Naive thymus-derived CD4-positive, alpha-beta T cell (primary cell): ENCODE measurements at regions of chr7 and their contacts with region 1.

Region 1: DNA sequence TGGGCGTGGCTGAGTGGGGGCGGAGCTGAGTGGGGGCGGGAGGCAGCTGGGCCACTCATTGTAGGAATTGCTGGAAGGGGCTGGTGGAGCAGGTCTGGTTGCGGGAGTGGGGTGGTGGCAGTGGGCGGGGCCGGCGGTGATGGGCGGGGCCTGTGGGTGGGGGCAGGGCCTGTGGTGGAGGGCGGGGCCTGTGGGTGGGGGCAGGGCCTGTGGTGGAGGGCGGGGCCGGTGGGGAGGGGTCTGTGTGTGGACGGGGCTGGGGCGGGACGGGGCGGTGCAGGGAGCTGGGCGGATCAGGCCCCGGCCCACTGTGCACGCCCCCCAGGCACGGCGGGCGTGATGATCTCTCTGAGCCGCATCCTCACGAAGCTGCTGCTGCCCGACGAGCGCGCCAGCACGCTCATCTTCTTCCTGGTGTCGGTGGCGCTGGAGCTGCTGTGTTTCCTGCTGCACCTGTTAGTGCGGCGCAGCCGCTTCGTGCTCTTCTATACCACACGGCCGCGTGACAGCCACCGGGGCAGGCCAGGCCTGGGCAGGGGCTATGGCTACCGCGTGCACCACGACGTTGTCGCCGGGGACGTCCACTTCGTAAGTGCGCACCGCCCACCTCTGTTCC is 14.0 kb downstream of the SLC29A4 start:
- DNase-seq: peak; percentile 49 to 83 (median 72)
- ATAC-seq: peak; percentile 95
- H3K4me3 ChIP-seq: peak overlapping the region; percentile 61
- H3K4me3 Mint-ChIP-seq: peak overlapping the region; percentile 82 to 92 (median 85)
- H3K27ac ChIP-seq: no peak overlapping the region
- H3K27ac Mint-ChIP-seq: peak overlapping the region in 8 of 9 donors; percentile 36 to 92 (median 74)
- H3K4me1 ChIP-seq: peaks cover 8 to 13% of the 10 kb centered on the region in 2 donors
- H3K4me1 Mint-ChIP-seq: peaks cover 9 to 17% (median 14%) of the 10 kb centered on the region in 7 donors
- H3K27me3 ChIP-seq: no peaks in the 10 kb centered on the region
- H3K27me3 Mint-ChIP-seq: peaks cover 0 to 28% (median 3%) of the 10 kb centered on the region in 5 donors

Region 2: GRCh38 chr7:5282543-5283316 is 14.0 kb before region 1 on chr7 and contains the start of gene SLC29A4:
- CTCF ChIA-PET with region 1: no interaction called
- POLR2A ChIA-PET with region 1: no interaction called
- intact Hi-C with region 1: loop called in 1 of 2 experiments (anchors 1 kb)
- DNase-seq: no peak
- ATAC-seq: peak; percentile 68
- H3K4me3 ChIP-seq: no peak within 1 kb of the TSS
- H3K4me3 Mint-ChIP-seq: peak within 1 kb of the TSS in 2 of 10 donors; percentile 37 to 52
- H3K27ac ChIP-seq: no peak within 1 kb of the TSS
- H3K27ac Mint-ChIP-seq: no peak within 1 kb of the TSS
- H3K4me1 ChIP-seq: no peaks in the 10 kb centered on the region
- H3K4me1 Mint-ChIP-seq: peaks cover 0 to 2% (median 0%) of the 10 kb centered on the region in 7 donors
- H3K27me3 ChIP-seq: no peaks in the 10 kb centered on the region
- H3K27me3 Mint-ChIP-seq: peaks cover 5 to 32% (median 5%) of the 10 kb centered on the region in 5 donors
- total RNA-seq, gene SLC29A4: 0.11 to 1.3 (median 0.32) TPM

Region 3: DNA sequence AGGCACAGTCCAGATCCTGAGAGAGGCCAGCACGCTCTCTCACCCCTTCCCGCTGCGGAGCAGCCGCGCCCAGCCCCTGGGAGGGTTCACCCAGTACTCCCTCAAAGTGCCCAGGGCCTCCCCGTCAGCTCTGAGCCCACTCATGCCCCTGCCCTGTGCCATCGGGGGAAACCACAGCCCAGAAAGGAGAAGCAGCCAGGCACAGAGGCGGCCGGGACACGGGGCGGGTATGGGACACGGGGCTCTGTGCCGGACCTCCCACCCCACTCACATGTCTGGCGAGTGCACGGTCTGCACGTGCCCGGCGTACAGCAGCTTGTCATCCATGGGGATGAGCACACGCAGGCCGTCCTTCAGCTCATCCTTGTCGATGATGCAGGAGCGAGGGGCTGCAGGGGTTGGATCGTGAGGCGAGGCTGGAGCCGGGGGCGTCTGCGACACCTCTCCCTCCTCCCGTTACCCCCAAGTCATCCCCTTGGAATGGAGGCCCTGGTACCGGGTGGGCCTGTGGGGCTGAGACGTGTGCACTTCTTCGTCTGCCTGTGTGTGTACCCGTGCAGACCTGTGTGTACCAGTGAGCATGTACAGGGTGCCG is 24.2 kb after region 1 on chr7:
- CTCF ChIA-PET with region 1: no interaction called
- POLR2A ChIA-PET with region 1: no interaction called
- intact Hi-C with region 1: no loop called
- DNase-seq: no peak
- ATAC-seq: no peak
- H3K4me3 ChIP-seq: no peak overlapping the region
- H3K4me3 Mint-ChIP-seq: no peak overlapping the region
- H3K27ac ChIP-seq: no peak overlapping the region
- H3K27ac Mint-ChIP-seq: no peak overlapping the region
- H3K4me1 ChIP-seq: no peaks in the 10 kb centered on the region
- H3K4me1 Mint-ChIP-seq: no peaks in the 10 kb centered on the region
- H3K27me3 ChIP-seq: no peaks in the 10 kb centered on the region
- H3K27me3 Mint-ChIP-seq: no peaks in the 10 kb centered on the region

Region 4: DNA sequence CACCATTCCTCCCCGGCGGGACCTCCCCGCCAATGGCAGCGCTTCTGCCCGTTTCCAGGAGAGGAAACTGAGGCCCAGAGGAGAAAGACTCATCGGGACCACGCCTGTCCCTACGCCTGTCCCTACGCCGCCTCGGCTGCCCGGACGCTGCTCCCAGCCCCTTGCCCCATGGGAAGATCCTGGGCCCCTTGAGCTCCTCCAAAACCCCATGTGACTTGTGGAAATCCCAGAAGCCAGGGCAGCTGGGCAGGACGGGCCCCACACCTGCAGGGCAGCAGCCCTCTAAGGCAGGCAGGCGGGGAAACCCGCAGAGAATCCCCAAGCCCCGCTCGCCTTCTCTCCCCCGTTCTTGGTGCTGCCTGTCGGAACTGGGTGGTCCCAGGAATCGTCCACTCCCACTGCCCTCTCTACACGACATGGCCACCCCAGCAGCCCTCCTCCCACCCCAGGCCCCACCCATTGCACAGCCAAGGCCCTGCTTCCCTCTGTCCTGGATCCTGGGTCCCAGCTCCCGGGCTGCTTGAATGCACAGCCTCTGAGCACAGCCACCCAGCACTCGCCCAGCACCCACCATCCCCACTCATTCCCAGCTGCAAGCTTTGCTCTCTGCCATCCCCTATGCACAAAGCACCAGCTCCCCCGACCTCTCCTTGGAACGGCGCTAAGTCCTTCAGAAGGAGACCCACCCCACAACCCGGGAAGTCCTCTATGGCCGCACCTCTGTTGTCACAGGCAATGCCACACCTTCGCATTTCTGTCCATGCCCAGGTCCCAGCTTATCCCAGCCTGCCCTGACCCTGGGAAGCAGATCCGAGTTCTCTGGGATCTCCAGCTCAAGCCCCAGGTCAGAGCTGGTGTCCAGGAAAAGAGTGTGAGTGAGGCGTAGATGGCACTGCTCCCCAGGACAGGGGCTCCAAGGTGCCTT is 36.7 kb after region 1 on chr7:
- CTCF ChIA-PET with region 1: interaction called, 3 read pairs
- POLR2A ChIA-PET with region 1: no interaction called
- intact Hi-C with region 1: loop called in 1 of 2 experiments (anchors 1 kb)
- DNase-seq: no peak
- ATAC-seq: no peak
- H3K4me3 ChIP-seq: no peak overlapping the region
- H3K4me3 Mint-ChIP-seq: peak overlapping the region in 2 of 10 donors; percentile 33 to 69
- H3K27ac ChIP-seq: no peak overlapping the region
- H3K27ac Mint-ChIP-seq: no peak overlapping the region
- H3K4me1 ChIP-seq: peaks cover 16 to 24% of the 10 kb centered on the region in 2 donors
- H3K4me1 Mint-ChIP-seq: peaks cover 18 to 32% (median 20%) of the 10 kb centered on the region in 7 donors
- H3K27me3 ChIP-seq: no peaks in the 10 kb centered on the region
- H3K27me3 Mint-ChIP-seq: peaks cover 0 to 3% (median 0%) of the 10 kb centered on the region in 5 donors

Region 5: DNA sequence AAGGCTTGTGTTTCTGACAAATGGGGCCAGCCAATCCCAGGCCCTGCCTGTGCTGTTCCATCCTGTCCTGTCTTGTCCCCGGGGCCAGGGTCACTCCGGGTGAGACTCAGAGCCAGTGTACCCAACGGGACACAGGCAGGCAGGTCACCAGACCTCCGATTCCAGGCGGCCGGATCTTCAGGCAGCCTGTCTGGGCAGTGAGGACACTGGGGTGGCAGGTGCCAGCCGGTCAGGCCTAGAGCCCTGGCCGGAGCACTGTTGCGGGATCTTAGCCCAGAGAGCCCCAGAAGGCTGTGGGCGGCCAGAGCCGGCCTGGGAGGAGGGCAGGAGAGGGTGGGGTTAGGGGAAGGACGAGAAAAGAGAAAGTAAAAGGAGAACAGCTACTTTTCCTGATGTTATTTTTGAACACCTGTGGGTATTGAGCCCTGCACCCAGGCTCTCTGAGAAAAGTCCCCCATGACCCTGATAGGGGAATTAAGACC is 261.2 kb after region 1 on chr7:
- CTCF ChIA-PET with region 1: no interaction called
- POLR2A ChIA-PET with region 1: no interaction called
- intact Hi-C with region 1: no loop called
- DNase-seq: peak in 3 of 9 donors; percentile 14 to 41 (median 23)
- ATAC-seq: no peak
- H3K4me3 ChIP-seq: peak overlapping the region; percentile 57
- H3K4me3 Mint-ChIP-seq: peak overlapping the region; percentile 82 to 91 (median 88)
- H3K27ac ChIP-seq: peak overlapping the region; percentile 85
- H3K27ac Mint-ChIP-seq: peak overlapping the region; percentile 78 to 97 (median 93)
- H3K4me1 ChIP-seq: peaks cover 39 to 47% of the 10 kb centered on the region in 2 donors
- H3K4me1 Mint-ChIP-seq: peaks cover 19 to 48% (median 41%) of the 10 kb centered on the region in 7 donors
- H3K27me3 ChIP-seq: peaks cover 0 to 4% of the 10 kb centered on the region in 2 donors
- H3K27me3 Mint-ChIP-seq: peaks cover 0 to 13% (median 0%) of the 10 kb centered on the region in 5 donors